SK-N-SH (cell line): ENCODE measurements at regions of chr9 and their contacts with region 1.

Region 1: DNA sequence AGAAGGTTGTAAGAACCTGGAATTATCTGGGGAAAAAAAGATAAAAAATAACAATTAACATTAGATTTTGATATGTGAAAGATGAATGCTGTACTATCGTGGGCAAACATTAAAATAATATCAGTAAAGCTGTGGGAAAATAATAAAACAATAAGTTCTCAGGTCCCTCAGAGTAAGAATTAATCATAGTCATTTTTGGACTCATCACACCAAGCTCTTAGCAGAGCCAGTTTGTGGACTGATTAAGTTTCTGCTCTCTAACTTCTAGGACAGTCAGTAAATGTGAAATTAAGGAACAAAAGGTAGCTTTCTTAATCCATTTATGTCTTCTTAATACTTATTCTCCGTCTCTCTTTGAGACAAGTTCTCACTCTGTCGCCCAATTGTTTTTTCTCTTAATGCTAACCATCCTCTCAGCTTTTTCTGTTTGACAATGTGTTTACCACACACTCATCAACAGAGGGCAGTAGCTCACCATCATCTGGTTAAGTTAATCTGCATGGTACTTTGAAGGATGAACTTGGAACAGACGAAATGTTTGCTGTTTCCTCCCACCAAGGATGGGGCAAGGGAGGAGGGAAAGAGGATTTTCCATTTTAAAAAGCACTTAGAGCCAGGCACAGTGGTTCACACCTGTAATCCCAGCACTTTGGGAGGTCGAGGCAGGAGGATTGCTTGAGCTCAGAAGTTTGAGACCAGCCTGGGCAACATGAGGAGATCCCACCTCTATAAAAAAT is 5.3 kb upstream of the ACO1 start:
- DNase-seq: peak; percentile 69
- H3K4me3 ChIP-seq: peak overlapping the region in 1 of 2 experiments; percentile 40; a peak in 1 of 4 replicates
- H3K27ac ChIP-seq: no peak overlapping the region
- H3K4me1 ChIP-seq: peaks cover 4% of the 10 kb centered on the region in 2 experiments; a peak in 2 of 4 replicates
- H3K27me3 ChIP-seq: no peaks in the 10 kb centered on the region
- CTCF ChIP-seq: peak; percentile 88
- EP300 ChIP-seq: no peak
- RAD21 ChIP-seq: peak; percentile 94

Region 2: DNA sequence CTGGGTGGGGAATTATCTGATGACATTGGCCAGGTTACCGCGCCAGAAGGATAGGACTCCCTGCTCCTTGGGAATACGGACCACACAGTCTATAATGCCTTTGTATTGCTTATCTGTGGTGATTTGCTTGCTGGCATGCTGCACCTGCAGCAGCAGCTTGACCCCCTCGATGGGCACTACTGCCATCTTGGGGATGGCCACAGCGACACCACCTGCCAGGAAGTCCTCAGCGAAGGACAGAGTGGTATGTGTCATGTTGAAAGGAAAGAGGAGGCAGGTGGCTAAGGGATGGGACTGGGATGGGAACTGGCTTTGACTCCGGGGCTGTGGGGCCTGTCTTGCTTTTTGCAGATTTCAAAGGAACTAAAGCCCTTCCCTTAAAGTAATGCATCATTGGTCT is 45.1 kb before region 1 on chr9:
- CTCF ChIA-PET with region 1: no interaction called
- POLR2A ChIA-PET with region 1: no interaction called
- DNase-seq: no peak
- H3K4me3 ChIP-seq: no peak overlapping the region
- H3K27ac ChIP-seq: no peak overlapping the region
- H3K4me1 ChIP-seq: no peaks in the 10 kb centered on the region
- H3K27me3 ChIP-seq: no peaks in the 10 kb centered on the region
- CTCF ChIP-seq: no peak
- EP300 ChIP-seq: no peak
- RAD21 ChIP-seq: no peak; the same call in 1 of the 2 replicates

Region 3: GRCh38 chr9:32431940-32432555 is 52.9 kb after region 1 on chr9:
- CTCF ChIA-PET with region 1: interaction called, 200 read pairs
- POLR2A ChIA-PET with region 1: no interaction called
- DNase-seq: peak; percentile 55
- H3K4me3 ChIP-seq: no peak overlapping the region
- H3K27ac ChIP-seq: peak overlapping the region in 1 of 2 experiments; percentile 57; a peak in 2 of 4 replicates
- H3K4me1 ChIP-seq: peaks cover 0 to 17% of the 10 kb centered on the region in 2 experiments; a peak in 3 of 4 replicates
- H3K27me3 ChIP-seq: no peaks in the 10 kb centered on the region
- CTCF ChIP-seq: peak; percentile 73
- EP300 ChIP-seq: no peak
- RAD21 ChIP-seq: peak; percentile 57

Region 4: DNA sequence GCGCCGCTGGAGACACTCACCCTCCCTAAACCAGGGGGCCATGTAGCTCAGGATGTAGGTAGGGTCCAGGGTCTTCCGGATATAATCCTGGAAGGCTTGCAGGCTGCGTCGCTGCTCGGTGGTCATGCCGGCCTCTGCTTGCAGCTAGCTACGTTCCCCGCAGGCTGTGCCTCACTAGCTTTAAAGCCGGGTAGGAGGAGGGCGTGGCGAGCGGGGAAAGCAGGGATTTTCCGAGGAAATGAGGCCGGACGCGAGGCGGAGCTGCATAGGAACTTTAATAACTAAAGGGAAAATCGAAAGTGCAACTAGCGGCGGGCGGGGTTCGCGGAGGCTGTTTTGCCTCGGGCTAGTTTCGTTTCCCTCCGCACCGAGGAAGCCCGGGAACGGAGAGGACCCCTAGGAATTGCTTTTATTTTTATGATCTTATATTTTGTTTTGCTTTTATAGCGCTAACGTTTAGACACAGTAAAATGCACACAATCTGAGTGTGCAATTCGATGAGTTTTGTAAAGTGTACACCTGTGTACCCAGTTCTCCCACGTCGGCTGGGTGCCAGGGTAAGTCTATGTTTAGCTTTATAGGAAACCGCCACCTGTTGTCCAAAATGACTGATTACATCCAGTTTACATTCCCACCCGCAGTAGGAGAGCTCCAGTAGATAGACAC is 147.0 kb after region 1 on chr9 and contains the start of gene RIGI:
- CTCF ChIA-PET with region 1: interaction called, 127 read pairs
- POLR2A ChIA-PET with region 1: interaction called, 4 read pairs
- DNase-seq: peak; percentile 64
- H3K4me3 ChIP-seq: peak within 1 kb of the TSS; percentile 70 to 79
- H3K27ac ChIP-seq: peak within 1 kb of the TSS; percentile 72 to 86
- H3K4me1 ChIP-seq: peaks cover 0 to 7% of the 10 kb centered on the region in 2 experiments; a peak in 3 of 4 replicates
- H3K27me3 ChIP-seq: no peaks in the 10 kb centered on the region
- CTCF ChIP-seq: peak; percentile 65
- EP300 ChIP-seq: no peak
- RAD21 ChIP-seq: peak; percentile 59
- polyA plus RNA-seq, gene RIGI: 1.5 and 2.5 TPM in 2 replicates

Region 5: DNA sequence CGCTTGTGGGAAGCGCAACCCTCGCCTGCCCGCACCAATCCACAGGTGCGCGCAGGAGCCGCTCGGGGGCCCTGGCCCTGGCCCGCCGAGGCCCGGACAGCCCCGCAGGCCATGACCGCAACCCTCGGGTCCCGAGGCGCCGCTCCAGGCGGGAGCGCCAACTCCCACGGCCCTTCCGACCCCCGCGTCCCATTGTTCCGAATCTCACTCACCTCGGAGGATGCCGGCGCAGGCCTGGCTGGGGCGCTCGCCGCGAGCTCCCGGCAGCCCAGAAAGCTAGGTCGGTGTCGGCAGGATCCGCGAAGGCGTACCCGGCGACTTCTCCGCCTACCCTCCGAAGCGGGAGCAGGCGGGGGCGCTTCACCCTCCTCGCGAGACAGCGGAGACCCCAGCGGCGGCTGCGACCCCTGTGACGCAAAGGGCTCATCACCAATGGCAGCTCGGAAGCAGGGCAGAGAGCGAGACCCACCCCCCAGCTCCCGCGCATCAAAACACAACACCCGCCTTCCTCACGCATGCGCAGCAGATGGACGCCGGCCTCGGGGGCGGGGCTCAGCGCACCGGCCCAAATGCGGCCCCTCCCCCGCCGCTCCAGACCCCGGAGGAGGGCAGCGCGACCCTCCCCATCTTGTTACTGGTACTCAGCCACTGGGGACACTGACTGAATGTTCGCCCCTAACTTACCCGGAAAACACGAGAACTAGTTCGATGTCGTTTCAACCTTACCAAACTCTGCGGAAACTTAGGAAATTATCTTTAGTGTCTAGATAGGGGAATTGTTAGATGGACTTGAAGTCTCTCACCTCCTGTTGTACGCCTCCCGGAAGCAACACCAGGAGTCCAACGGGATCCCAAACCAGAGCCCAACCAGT is 171.6 kb after region 1 on chr9:
- CTCF ChIA-PET with region 1: interaction called, 51 read pairs
- POLR2A ChIA-PET with region 1: interaction called, 3 read pairs
- DNase-seq: peak; percentile 98
- H3K4me3 ChIP-seq: peak overlapping the region; percentile 91 to 94
- H3K27ac ChIP-seq: peak overlapping the region; percentile 97 to 98
- H3K4me1 ChIP-seq: peaks cover 0 to 2% of the 10 kb centered on the region in 2 experiments; a peak in 2 of 4 replicates
- H3K27me3 ChIP-seq: no peaks in the 10 kb centered on the region
- CTCF ChIP-seq: no peak
- EP300 ChIP-seq: no peak
- RAD21 ChIP-seq: no peak

Region 6: GRCh38 chr9:32571969-32572899 is 193.1 kb after region 1 on chr9:
- CTCF ChIA-PET with region 1: interaction called, 620 read pairs
- POLR2A ChIA-PET with region 1: no interaction called
- DNase-seq: peak; percentile 79
- H3K4me3 ChIP-seq: peak overlapping the region; percentile 86 to 100
- H3K27ac ChIP-seq: peak overlapping the region; percentile 65 to 69
- H3K4me1 ChIP-seq: peaks cover 17 to 18% of the 10 kb centered on the region in 2 experiments; a peak in 3 of 4 replicates
- H3K27me3 ChIP-seq: no peaks in the 10 kb centered on the region
- CTCF ChIP-seq: peak; percentile 79
- EP300 ChIP-seq: no peak
- RAD21 ChIP-seq: peak; percentile 65